IMR-90 (cell line): ENCODE measurements at regions of chr14 and their contacts with region 1.

Region 1: GRCh38 chr14:50532502-50533240 is at the start of gene MAP4K5:
- DNase-seq: peak; percentile 89
- ATAC-seq: peak; percentile 92
- H3K4me3 ChIP-seq: peak within 1 kb of the TSS; percentile 95
- H3K27ac ChIP-seq: peak within 1 kb of the TSS; percentile 97
- H3K4me1 ChIP-seq: peaks cover 16% of the 10 kb centered on the region
- H3K27me3 ChIP-seq: no peaks in the 10 kb centered on the region
- CTCF ChIP-seq: peak; percentile 98
- POLR2A ChIP-seq: peak; percentile 81
- RAD21 ChIP-seq: peak; percentile 98
- total RNA-seq, gene MAP4K5: 46.1 and 66.1 TPM in 2 replicates

Region 2: GRCh38 chr14:49862089-49862673 is 670.5 kb before region 1 on chr14:
- CTCF ChIA-PET with region 1: no interaction called
- POLR2A ChIA-PET with region 1: no interaction called
- dilution Hi-C with region 1: no loop called
- in situ Hi-C with region 1: loop called (anchors 10 kb)
- intact Hi-C with region 1: loop called (anchors 2 kb)
- DNase-seq: peak; percentile 87
- ATAC-seq: peak; percentile 59
- H3K4me3 ChIP-seq: peak overlapping the region; percentile 60
- H3K27ac ChIP-seq: peak overlapping the region; percentile 95
- H3K4me1 ChIP-seq: peaks cover 6% of the 10 kb centered on the region
- H3K27me3 ChIP-seq: no peaks in the 10 kb centered on the region
- CTCF ChIP-seq: peak; percentile 100
- POLR2A ChIP-seq: no peak
- RAD21 ChIP-seq: peak; percentile 43

Region 3: DNA sequence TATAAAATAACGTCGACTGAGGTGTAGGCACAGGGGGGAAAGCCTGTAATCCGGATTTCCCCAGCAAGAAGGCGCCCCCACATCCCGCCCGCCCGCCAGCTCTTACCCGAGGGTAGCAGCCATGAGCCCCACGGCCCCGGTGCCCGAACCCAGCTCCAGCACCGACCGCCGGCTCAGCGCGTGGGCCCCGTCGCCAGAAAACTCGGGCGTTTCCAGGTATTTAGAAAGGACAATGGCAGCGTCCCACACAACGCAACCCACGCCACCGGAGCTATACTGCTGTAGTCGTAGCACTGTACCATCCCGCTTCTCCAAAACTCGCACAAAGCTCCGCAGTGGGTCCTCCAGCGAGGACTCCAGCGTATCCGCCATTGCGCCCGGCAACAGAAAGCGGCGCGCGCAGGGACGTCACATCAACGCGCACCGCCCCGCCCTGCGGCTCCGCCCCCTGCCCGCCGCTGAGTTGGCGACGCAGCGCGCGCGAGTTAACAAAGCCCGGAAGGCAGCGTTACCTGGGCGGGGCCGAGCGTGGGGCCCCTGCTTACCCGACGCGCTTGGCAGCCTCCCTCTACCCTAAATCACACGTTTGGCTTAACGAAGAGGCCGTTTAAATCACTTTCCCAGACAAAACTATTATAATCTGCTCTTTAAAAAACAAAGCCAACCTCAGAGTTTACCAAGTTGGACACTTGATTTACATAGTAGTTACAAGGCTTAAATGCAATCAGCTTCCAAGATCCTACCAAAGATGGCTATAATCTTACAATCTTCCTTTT is 416.3 kb before region 1 on chr14 and contains the start of gene VCPKMT:
- CTCF ChIA-PET with region 1: no interaction called
- POLR2A ChIA-PET with region 1: no interaction called
- dilution Hi-C with region 1: no loop called
- in situ Hi-C with region 1: no loop called
- intact Hi-C with region 1: loop called (anchors 5 kb)
- DNase-seq: peak; percentile 86
- ATAC-seq: peak; percentile 99
- H3K4me3 ChIP-seq: peak within 1 kb of the TSS; percentile 92
- H3K27ac ChIP-seq: peak within 1 kb of the TSS; percentile 91
- H3K4me1 ChIP-seq: no peaks in the 10 kb centered on the region
- H3K27me3 ChIP-seq: no peaks in the 10 kb centered on the region
- CTCF ChIP-seq: no peak
- POLR2A ChIP-seq: peak; percentile 86
- RAD21 ChIP-seq: no peak
- total RNA-seq, gene VCPKMT: 2.5 and 4.7 TPM in 2 replicates

Region 4: DNA sequence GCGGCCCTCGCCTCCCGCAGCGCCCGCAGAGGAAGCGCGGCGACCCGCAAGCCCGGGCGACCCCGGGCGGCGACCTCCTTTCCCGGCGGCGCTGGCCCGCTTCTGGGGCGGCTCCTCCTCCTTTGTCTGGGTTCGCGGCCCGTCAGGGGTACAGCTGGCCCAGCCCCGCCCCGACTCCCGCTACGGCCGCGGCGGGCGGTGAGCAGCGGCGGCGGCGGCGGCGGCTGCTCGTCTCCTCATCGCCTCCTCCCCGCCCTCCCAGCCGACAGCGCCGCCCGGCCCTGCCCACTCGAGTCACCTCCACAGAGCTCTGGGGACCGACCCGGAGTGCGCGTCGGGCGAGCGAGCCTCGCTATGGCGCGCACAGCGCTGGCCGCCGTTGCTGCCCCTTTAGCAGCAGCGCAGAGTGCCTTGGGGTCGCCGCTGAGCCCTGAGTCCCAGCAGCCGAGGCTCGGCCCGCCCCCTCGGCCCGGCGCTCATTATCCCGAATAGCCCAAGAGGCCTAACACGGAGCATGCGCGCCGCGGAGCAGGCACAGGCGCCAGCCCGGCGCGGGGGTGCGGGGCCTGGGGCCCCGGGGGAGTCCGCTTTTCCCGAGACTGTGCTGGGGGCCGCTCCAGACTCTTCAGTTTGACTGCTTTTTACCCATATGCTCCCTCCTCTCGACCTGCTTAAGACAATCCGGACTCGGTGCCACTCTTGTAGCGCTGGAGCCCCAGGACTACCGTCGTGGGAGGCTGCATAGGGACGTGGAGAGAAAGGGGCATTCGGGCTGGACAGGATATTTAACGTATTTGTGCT is 301.0 kb before region 1 on chr14 and contains the start of gene SOS2:
- CTCF ChIA-PET with region 1: no interaction called
- POLR2A ChIA-PET with region 1: no interaction called
- dilution Hi-C with region 1: no loop called
- in situ Hi-C with region 1: no loop called
- intact Hi-C with region 1: loop called (anchors 10 kb)
- DNase-seq: peak; percentile 71
- ATAC-seq: peak; percentile 94
- H3K4me3 ChIP-seq: peak within 1 kb of the TSS; percentile 88
- H3K27ac ChIP-seq: peak within 1 kb of the TSS; percentile 92
- H3K4me1 ChIP-seq: peaks cover 1% of the 10 kb centered on the region; the same call in 1 of the 2 replicates
- H3K27me3 ChIP-seq: no peaks in the 10 kb centered on the region
- CTCF ChIP-seq: no peak; the same call in 1 of the 2 replicates
- POLR2A ChIP-seq: peak; percentile 86
- RAD21 ChIP-seq: no peak
- total RNA-seq, gene SOS2: 10.9 and 13.1 TPM in 2 replicates

Region 5: GRCh38 chr14:50321009-50321660 is 211.5 kb before region 1 on chr14:
- CTCF ChIA-PET with region 1: interaction called, 8 read pairs
- POLR2A ChIA-PET with region 1: no interaction called
- dilution Hi-C with region 1: no loop called
- in situ Hi-C with region 1: loop called (anchors 5 kb)
- intact Hi-C with region 1: loop called (anchors 1 kb)
- DNase-seq: peak; percentile 98
- ATAC-seq: peak; percentile 95
- H3K4me3 ChIP-seq: peak overlapping the region; percentile 49; the same call in 1 of the 2 replicates
- H3K27ac ChIP-seq: no peak overlapping the region
- H3K4me1 ChIP-seq: peaks cover 9% of the 10 kb centered on the region
- H3K27me3 ChIP-seq: no peaks in the 10 kb centered on the region
- CTCF ChIP-seq: peak; percentile 88
- POLR2A ChIP-seq: no peak
- RAD21 ChIP-seq: peak; percentile 81

Region 6: DNA sequence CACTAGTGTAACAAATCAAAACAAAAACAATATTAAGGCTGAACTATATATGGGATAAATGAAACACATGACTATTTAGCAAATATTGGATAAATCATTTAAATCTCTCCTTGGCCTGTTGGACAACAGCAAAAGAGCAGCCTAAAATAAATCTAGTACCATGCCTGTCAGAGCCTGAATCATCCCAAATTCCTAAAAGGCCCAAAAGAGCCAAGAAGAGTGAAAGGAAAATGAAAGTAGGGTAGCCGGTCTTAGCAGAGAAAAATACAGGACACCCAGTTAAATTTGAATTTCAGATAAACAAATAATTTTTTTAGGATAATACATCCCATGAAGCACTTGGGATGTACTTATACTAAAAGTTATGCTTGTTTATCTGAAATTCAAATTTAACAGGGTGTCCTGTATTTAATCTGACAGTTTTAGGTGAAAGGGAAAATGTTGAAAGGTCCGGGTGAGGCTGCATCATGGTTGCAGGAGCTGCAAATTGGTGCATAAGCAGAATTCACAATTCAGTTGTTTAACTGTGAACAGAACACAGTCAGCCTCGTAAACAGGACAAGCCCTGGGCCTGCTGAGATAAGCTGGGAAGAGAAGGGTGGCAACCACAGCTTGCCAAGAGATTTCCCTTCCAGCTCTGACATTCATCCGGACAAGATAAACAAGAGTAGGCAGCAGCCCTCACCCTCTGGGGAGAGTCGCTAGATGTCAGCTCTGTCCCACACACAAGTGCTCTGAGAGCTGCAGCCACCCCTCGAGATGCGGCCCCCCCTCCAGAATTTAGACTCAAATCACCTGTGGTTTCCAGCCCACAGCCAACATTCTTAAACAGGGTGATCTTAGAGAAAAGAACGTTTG is 190.2 kb before region 1 on chr14:
- CTCF ChIA-PET with region 1: interaction called, 3 read pairs
- POLR2A ChIA-PET with region 1: interaction called, 6 read pairs
- dilution Hi-C with region 1: no loop called
- in situ Hi-C with region 1: no loop called
- intact Hi-C with region 1: loop called (anchors 2 kb)
- DNase-seq: peak; percentile 71
- ATAC-seq: peak; percentile 73
- H3K4me3 ChIP-seq: peak overlapping the region; percentile 6; the same call in 1 of the 2 replicates
- H3K27ac ChIP-seq: peak overlapping the region; percentile 85; the same call in 1 of the 2 replicates
- H3K4me1 ChIP-seq: peaks cover 19% of the 10 kb centered on the region
- H3K27me3 ChIP-seq: no peaks in the 10 kb centered on the region
- CTCF ChIP-seq: peak; percentile 52
- POLR2A ChIP-seq: no peak
- RAD21 ChIP-seq: peak; percentile 58

Region 7: GRCh38 chr14:50396631-50397390 is 135.9 kb before region 1 on chr14 and contains the start of gene CDKL1:
- CTCF ChIA-PET with region 1: interaction called, 4 read pairs
- POLR2A ChIA-PET with region 1: no interaction called
- dilution Hi-C with region 1: no loop called
- in situ Hi-C with region 1: no loop called
- intact Hi-C with region 1: loop called (anchors 5 kb)
- DNase-seq: peak; percentile 70
- ATAC-seq: peak; percentile 84
- H3K4me3 ChIP-seq: peak within 1 kb of the TSS; percentile 61
- H3K27ac ChIP-seq: peak within 1 kb of the TSS; percentile 77
- H3K4me1 ChIP-seq: peaks cover 19% of the 10 kb centered on the region
- H3K27me3 ChIP-seq: no peaks in the 10 kb centered on the region
- CTCF ChIP-seq: no peak
- POLR2A ChIP-seq: no peak
- RAD21 ChIP-seq: no peak
- total RNA-seq, gene CDKL1: 3.8 and 7.2 TPM in 2 replicates